ENCODE measurements at regions of chr1 and their contacts with region 1.

Region 1: DNA sequence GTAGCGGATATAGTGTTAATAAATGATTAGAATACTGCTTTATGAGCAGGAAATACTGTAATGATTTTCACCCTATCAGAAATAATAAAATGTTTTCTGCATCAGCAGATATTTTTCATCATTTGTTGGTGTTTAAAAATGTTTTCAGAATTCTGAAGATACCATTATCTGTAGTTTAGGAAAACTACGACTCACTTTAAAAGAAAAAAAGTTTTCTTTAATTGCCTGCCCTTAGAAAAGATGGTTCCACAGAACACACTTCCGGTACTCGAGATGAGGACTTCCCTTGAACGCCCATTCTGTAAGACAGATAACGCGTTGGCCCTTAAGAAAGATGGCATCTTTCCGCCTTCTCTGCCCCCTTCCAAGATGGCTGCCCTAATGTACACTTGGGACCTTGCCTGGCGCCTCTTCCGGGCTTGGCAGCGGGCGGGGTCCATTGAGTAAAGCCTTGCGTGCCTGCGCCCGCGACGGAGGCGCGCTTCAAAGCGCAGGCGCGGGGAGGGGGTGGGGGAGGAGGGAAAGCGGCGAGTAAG is at the start of gene SZRD1:
- DNase-seq: peak; percentile 94 to 99 (median 98)
- H3K4me3 ChIP-seq: peak within 1 kb of the TSS; percentile 85
- H3K4me3 Mint-ChIP-seq: peak within 1 kb of the TSS; percentile 95 to 99 (median 98)
- H3K27ac ChIP-seq: peak within 1 kb of the TSS; percentile 99
- H3K27ac Mint-ChIP-seq: peak within 1 kb of the TSS; percentile 99 to 100 (median 99)
- H3K4me1 ChIP-seq: peaks cover 42% of the 10 kb centered on the region
- H3K4me1 Mint-ChIP-seq: peaks cover 22 to 52% (median 32%) of the 10 kb centered on the region in 4 donors
- H3K27me3 ChIP-seq: no peaks in the 10 kb centered on the region
- H3K27me3 Mint-ChIP-seq: no peaks in the 10 kb centered on the region
- total RNA-seq, gene SZRD1: 79.1 to 81.0 TPM

Region 2: DNA sequence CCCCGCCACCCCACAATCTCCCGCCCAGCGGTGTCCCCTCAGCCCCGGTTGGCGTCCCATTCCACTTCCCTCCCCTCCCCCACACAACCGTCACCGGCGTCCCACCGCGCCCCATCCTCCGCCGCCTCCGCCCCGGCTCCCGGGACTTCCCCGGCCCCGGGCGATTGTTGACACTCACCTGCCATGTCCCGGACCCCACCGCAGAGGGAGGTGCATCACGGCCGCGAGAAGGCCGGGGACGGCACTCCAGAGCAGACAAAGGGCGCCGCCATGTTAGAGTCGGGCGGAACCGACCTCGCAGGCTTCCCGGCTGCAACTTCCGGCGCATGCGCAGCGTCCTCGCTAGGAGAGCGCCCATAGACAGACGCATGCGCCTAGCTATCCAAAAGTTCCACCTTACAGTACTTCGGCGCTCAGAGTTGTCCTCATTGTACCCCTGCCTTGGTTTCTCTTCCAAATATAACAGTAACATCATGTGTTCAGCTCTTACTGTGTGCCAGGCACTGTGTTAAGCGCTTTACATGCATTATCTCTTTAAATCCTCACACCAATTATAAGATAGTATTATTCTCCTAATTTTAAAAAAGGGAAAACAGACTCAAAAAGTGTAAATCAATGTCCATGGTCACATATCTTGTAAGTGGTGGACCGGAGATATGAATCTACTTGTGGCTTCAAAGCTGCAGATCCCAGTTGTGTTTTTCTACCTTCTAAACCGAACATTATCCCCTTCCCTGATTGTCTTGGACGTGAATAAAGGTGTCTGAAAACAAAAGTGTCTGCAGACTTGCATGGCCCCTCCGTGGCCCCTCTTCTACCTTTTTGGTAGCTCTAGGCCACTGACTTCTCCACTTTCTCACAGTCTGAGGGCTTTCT is 390.7 kb before region 1 on chr1 and contains the start of gene ZBTB17:
- CTCF ChIA-PET with region 1: no interaction called
- POLR2A ChIA-PET with region 1: no interaction called
- intact Hi-C with region 1: loop called (anchors 10 kb)
- DNase-seq: peak; percentile 94 to 96 (median 95)
- H3K4me3 ChIP-seq: peak within 1 kb of the TSS; percentile 43 to 83
- H3K4me3 Mint-ChIP-seq: peak within 1 kb of the TSS; percentile 87 to 97 (median 89)
- H3K27ac ChIP-seq: peak within 1 kb of the TSS; percentile 70
- H3K27ac Mint-ChIP-seq: peak within 1 kb of the TSS; percentile 88 to 96 (median 94)
- H3K4me1 ChIP-seq: peaks cover 25% of the 10 kb centered on the region
- H3K4me1 Mint-ChIP-seq: peaks cover 22 to 43% (median 32%) of the 10 kb centered on the region in 4 donors
- H3K27me3 ChIP-seq: no peaks in the 10 kb centered on the region
- H3K27me3 Mint-ChIP-seq: no peaks in the 10 kb centered on the region
- total RNA-seq, gene ZBTB17: 52.6 to 61.0 TPM

Region 3: DNA sequence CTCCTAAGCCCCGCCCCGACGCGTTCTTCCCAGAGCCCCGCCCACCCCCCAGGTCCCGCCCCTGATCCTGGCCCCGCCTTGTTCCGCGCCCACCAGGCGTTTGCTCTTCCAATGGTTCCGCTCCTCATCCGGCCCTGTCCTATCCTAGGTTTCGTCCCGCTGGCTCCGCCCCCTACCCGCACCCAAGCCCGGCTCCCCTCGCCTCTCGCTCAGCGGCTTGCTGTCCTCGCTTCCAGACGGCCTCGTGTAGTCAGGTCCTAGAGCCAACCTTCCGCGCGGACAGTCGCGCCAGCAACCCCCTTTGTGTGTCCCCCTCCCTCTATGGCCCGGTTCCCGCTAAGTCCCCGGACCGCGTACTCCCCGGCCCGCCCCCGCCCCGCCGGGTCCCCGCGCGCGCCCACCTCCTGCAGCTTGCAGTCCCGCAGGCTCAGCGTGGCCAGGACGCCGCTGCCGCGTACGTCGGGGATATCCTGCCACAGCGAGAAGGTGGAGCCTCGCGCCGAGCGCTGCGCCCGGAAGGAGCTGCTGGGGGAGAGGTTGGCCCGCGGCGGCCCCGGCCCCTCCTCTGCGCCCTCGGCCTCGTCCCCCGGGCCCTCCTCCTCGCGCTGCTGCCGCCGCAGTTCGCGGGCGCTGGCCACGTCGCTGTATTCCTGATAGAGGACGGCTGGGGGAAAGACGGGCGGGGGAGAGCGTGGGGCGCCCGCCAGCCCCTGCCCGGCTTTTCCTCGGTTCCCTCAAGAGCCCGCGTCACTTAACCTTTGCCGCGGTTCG is 160.1 kb before region 1 on chr1:
- CTCF ChIA-PET with region 1: interaction called, 4 read pairs
- POLR2A ChIA-PET with region 1: interaction called, 3 read pairs
- intact Hi-C with region 1: loop called (anchors 1 kb)
- DNase-seq: peak; percentile 93 to 97 (median 94)
- H3K4me3 ChIP-seq: peak overlapping the region; percentile 52 to 61
- H3K4me3 Mint-ChIP-seq: peak overlapping the region; percentile 89 to 97 (median 90)
- H3K27ac ChIP-seq: peak overlapping the region; percentile 76
- H3K27ac Mint-ChIP-seq: peak overlapping the region; percentile 94 to 98 (median 97)
- H3K4me1 ChIP-seq: peaks cover 20% of the 10 kb centered on the region
- H3K4me1 Mint-ChIP-seq: peaks cover 1 to 36% (median 16%) of the 10 kb centered on the region in 4 donors
- H3K27me3 ChIP-seq: no peaks in the 10 kb centered on the region
- H3K27me3 Mint-ChIP-seq: no peaks in the 10 kb centered on the region

Region 4: GRCh38 chr1:16351994-16352841 is 14.6 kb before region 1 on chr1 and contains the start of gene FBXO42:
- CTCF ChIA-PET with region 1: interaction called, 121 read pairs
- POLR2A ChIA-PET with region 1: interaction called, 27 read pairs
- intact Hi-C with region 1: loop called (anchors 1 kb)
- DNase-seq: peak; percentile 90 to 95 (median 94)
- H3K4me3 ChIP-seq: peak within 1 kb of the TSS; percentile 88 to 90
- H3K4me3 Mint-ChIP-seq: peak within 1 kb of the TSS; percentile 89 to 97 (median 96)
- H3K27ac ChIP-seq: peak within 1 kb of the TSS; percentile 95
- H3K27ac Mint-ChIP-seq: peak within 1 kb of the TSS; percentile 90 to 98 (median 95)
- H3K4me1 ChIP-seq: peaks cover 44% of the 10 kb centered on the region
- H3K4me1 Mint-ChIP-seq: peaks cover 17 to 37% (median 30%) of the 10 kb centered on the region in 4 donors
- H3K27me3 ChIP-seq: no peaks in the 10 kb centered on the region
- H3K27me3 Mint-ChIP-seq: no peaks in the 10 kb centered on the region
- total RNA-seq, gene FBXO42: 21.6 to 25.6 TPM

Region 5: GRCh38 chr1:16420424-16421118 is 53.8 kb after region 1 on chr1:
- CTCF ChIA-PET with region 1: interaction called, 8 read pairs
- POLR2A ChIA-PET with region 1: interaction called, 22 read pairs
- intact Hi-C with region 1: loop called (anchors 5 kb)
- DNase-seq: peak; percentile 65 to 77 (median 72)
- H3K4me3 ChIP-seq: peak overlapping the region in 1 of 2 donors; percentile 9
- H3K4me3 Mint-ChIP-seq: peak overlapping the region; percentile 52 to 87 (median 82)
- H3K27ac ChIP-seq: peak overlapping the region; percentile 36
- H3K27ac Mint-ChIP-seq: peak overlapping the region; percentile 80 to 93 (median 93)
- H3K4me1 ChIP-seq: peaks cover 30% of the 10 kb centered on the region
- H3K4me1 Mint-ChIP-seq: peaks cover 24 to 35% (median 29%) of the 10 kb centered on the region in 4 donors
- H3K27me3 ChIP-seq: no peaks in the 10 kb centered on the region
- H3K27me3 Mint-ChIP-seq: no peaks in the 10 kb centered on the region

Region 6: GRCh38 chr1:16498573-16499413 is 132.0 kb after region 1 on chr1:
- CTCF ChIA-PET with region 1: no interaction called
- POLR2A ChIA-PET with region 1: interaction called, 3 read pairs
- intact Hi-C with region 1: loop called (anchors 5 kb)
- DNase-seq: peak; percentile 78 to 83 (median 79)
- H3K4me3 ChIP-seq: peak overlapping the region; percentile 36 to 72
- H3K4me3 Mint-ChIP-seq: peak overlapping the region; percentile 82 to 95 (median 93)
- H3K27ac ChIP-seq: peak overlapping the region; percentile 59
- H3K27ac Mint-ChIP-seq: peak overlapping the region in 4 of 7 donors; percentile 55 to 87 (median 69)
- H3K4me1 ChIP-seq: peaks cover 5% of the 10 kb centered on the region
- H3K4me1 Mint-ChIP-seq: peaks cover 7 to 31% (median 15%) of the 10 kb centered on the region in 4 donors
- H3K27me3 ChIP-seq: no peaks in the 10 kb centered on the region
- H3K27me3 Mint-ChIP-seq: no peaks in the 10 kb centered on the region

Region 7: GRCh38 chr1:17053685-17054410 is 687.1 kb after region 1 on chr1 and contains the start of gene SDHB:
- CTCF ChIA-PET with region 1: no interaction called
- POLR2A ChIA-PET with region 1: no interaction called
- intact Hi-C with region 1: loop called (anchors 10 kb)
- DNase-seq: peak; percentile 98 to 100 (median 99)
- H3K4me3 ChIP-seq: peak within 1 kb of the TSS; percentile 72 to 89
- H3K4me3 Mint-ChIP-seq: peak within 1 kb of the TSS; percentile 97 to 100 (median 99)
- H3K27ac ChIP-seq: peak within 1 kb of the TSS; percentile 83
- H3K27ac Mint-ChIP-seq: peak within 1 kb of the TSS; percentile 95 to 99 (median 99)
- H3K4me1 ChIP-seq: peaks cover 18% of the 10 kb centered on the region
- H3K4me1 Mint-ChIP-seq: peaks cover 17 to 38% (median 27%) of the 10 kb centered on the region in 4 donors
- H3K27me3 ChIP-seq: no peaks in the 10 kb centered on the region
- H3K27me3 Mint-ChIP-seq: peaks cover 0 to 2% of the 10 kb centered on the region in 2 donors
- total RNA-seq, gene SDHB: 57.0 to 66.4 TPM